OCI-LY7 (cell line): ENCODE measurements at regions of chr19 and their contacts with region 1.

Region 1: DNA sequence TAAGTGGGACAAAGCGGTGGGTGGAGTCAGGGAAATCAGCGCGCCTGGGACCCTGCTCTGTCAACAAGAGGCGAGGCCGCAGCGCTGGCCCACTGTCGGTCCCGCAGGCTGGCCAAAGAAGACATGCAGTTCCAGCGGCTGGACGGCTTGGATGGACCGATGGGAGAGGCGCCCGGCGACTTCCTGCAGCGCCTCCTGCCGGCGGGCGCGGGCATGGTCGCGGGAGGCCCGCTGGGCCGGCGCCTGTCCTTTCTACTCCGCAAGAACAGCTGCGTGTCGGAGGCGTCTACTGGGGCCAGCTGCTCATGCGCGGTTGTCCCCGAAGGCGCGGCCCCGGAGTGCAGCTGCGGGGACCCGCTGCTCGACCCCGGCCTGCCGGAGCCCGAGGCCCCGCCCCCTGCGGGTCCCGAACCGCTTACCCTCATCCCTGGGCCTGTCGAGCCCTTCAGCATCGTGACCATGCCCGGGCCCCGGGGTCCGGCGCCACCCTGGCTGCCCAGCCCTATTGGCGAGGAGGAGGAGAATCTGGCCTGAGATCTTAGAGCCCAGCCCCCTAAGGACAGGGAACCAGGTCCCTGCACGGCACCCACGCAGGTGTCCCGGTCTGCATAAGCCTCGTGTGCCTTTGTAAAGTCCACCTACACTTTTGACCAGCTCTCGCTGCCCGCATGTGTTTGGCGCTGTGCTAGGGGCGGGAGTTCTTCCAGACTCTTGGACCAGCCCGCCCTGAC is 6.1 kb downstream of the BEST2 start:
- DNase-seq: peak; percentile 35
- H3K4me3 ChIP-seq: no peak overlapping the region
- H3K27ac ChIP-seq: no peak overlapping the region
- H3K4me1 ChIP-seq: no peaks in the 10 kb centered on the region
- CTCF ChIP-seq: peak; percentile 82

Region 2: GRCh38 chr19:12716861-12717260 is 40.8 kb before region 1 on chr19:
- CTCF ChIA-PET with region 1: no interaction called
- POLR2A ChIA-PET with region 1: no interaction called
- intact Hi-C with region 1: loop called (anchors 2 kb)
- DNase-seq: peak; percentile 64
- H3K4me3 ChIP-seq: no peak overlapping the region
- H3K27ac ChIP-seq: no peak overlapping the region
- H3K4me1 ChIP-seq: peaks cover 6% of the 10 kb centered on the region
- CTCF ChIP-seq: peak; percentile 68

Region 3: GRCh38 chr19:12796146-12797071 is 38.7 kb after region 1 on chr19:
- CTCF ChIA-PET with region 1: no interaction called
- POLR2A ChIA-PET with region 1: no interaction called
- intact Hi-C with region 1: loop called (anchors 1 kb)
- DNase-seq: peak; percentile 86
- H3K4me3 ChIP-seq: no peak overlapping the region
- H3K27ac ChIP-seq: no peak overlapping the region
- H3K4me1 ChIP-seq: peaks cover 26% of the 10 kb centered on the region
- CTCF ChIP-seq: peak; percentile 93

Region 4: GRCh38 chr19:12806239-12807081 is 48.8 kb after region 1 on chr19 and contains the start of gene RNASEH2A:
- CTCF ChIA-PET with region 1: no interaction called
- POLR2A ChIA-PET with region 1: no interaction called
- intact Hi-C with region 1: no loop called
- DNase-seq: peak; percentile 97
- H3K4me3 ChIP-seq: peak within 1 kb of the TSS; percentile 70
- H3K27ac ChIP-seq: peak within 1 kb of the TSS; percentile 67
- H3K4me1 ChIP-seq: peaks cover 20% of the 10 kb centered on the region
- CTCF ChIP-seq: no peak
- total RNA-seq, gene RNASEH2A: 115 and 130 TPM in 2 replicates

Region 5: DNA sequence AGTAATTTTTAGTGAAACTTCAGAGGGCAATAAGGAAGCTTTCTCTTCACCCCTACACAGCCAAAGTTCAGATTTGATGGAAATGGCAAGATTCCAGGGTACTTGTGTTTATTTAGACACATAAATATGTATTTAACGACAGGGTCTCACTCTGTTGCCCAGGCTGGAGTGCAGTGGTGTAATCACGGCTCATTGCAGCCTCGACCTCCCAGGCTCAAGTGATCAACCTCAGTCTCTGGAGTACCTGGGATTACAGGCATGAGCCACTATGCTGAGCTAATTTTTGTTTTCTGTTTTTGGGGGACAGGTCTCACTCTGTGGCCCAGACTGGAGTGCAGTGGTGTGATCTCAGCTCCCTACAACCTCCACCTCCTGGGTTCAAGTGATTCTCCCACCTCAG is 163.3 kb after region 1 on chr19:
- CTCF ChIA-PET with region 1: no interaction called
- POLR2A ChIA-PET with region 1: no interaction called
- intact Hi-C with region 1: no loop called
- DNase-seq: no peak
- H3K4me3 ChIP-seq: no peak overlapping the region
- H3K27ac ChIP-seq: peak overlapping the region; percentile 21
- H3K4me1 ChIP-seq: peaks cover 12% of the 10 kb centered on the region
- CTCF ChIP-seq: no peak

Region 6: GRCh38 chr19:13012690-13013608 is 255.2 kb after region 1 on chr19:
- CTCF ChIA-PET with region 1: no interaction called
- POLR2A ChIA-PET with region 1: no interaction called
- intact Hi-C with region 1: no loop called
- DNase-seq: no peak
- H3K4me3 ChIP-seq: no peak overlapping the region
- H3K27ac ChIP-seq: no peak overlapping the region
- H3K4me1 ChIP-seq: no peaks in the 10 kb centered on the region
- CTCF ChIP-seq: no peak